Activated CD4-positive, alpha-beta T cell treated with anti-CD3 and anti-CD28 coated beads, Interleukin-2, amount 10 ng/mL, durations not matched to agents 24 days and 14 days (primary cell): ENCODE measurements at regions of chr7 and their contacts with region 1.

Region 1: DNA sequence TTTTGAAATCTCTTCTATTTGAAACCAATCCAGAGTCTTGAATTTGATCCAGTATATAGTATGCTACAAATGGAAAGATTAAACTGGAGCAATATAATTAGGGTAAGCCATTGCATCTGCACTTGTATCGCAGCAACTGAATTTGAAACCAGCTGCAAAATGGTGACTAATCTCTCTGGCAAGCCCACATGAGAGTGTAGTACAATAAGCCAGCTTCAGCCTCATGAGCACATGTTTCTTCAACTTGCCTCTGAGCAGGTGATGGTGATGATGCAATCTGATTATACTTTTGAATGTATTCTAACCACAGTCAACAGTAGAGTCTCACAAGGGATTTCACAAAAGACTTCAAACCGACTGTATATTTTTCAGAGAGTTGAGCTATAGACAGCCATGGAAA is 829 bp upstream of the RPA3 start:
- DNase-seq: peak; percentile 84
- H3K4me3 Mint-ChIP-seq: peak overlapping the region; percentile 47
- H3K27ac Mint-ChIP-seq: peak overlapping the region; percentile 73
- H3K4me1 Mint-ChIP-seq: peaks cover 17% of the 10 kb centered on the region
- H3K27me3 Mint-ChIP-seq: no peaks in the 10 kb centered on the region

Region 2: GRCh38 chr7:7408001-7408770 is 311.1 kb before region 1 on chr7:
- intact Hi-C with region 1: no loop called
- DNase-seq: no peak
- H3K4me3 Mint-ChIP-seq: no peak overlapping the region
- H3K27ac Mint-ChIP-seq: no peak overlapping the region
- H3K4me1 Mint-ChIP-seq: no peaks in the 10 kb centered on the region
- H3K27me3 Mint-ChIP-seq: peaks cover 2% of the 10 kb centered on the region

Region 3: GRCh38 chr7:7672545-7673239 is 46.5 kb before region 1 on chr7:
- intact Hi-C with region 1: loop called (anchors 1 kb)
- DNase-seq: peak; percentile 50
- H3K4me3 Mint-ChIP-seq: peak overlapping the region; percentile 55
- H3K27ac Mint-ChIP-seq: peak overlapping the region; percentile 72
- H3K4me1 Mint-ChIP-seq: peaks cover 29% of the 10 kb centered on the region
- H3K27me3 Mint-ChIP-seq: no peaks in the 10 kb centered on the region

Region 4: GRCh38 chr7:7920481-7920880 is 201.2 kb after region 1 on chr7:
- intact Hi-C with region 1: no loop called
- DNase-seq: peak; percentile 73
- H3K4me3 Mint-ChIP-seq: peak overlapping the region; percentile 0
- H3K27ac Mint-ChIP-seq: no peak overlapping the region
- H3K4me1 Mint-ChIP-seq: peaks cover 30% of the 10 kb centered on the region
- H3K27me3 Mint-ChIP-seq: no peaks in the 10 kb centered on the region